HepG2 (cell line): ENCODE measurements at regions of chr1 and their contacts with region 1.

Region 1: GRCh38 chr1:155989242-155990004 is 11.1 kb upstream of the ARHGEF2 start:
- DNase-seq: peak; percentile 50
- ATAC-seq: peak; percentile 80
- H3K4me3 ChIP-seq: peak overlapping the region in 1 of 3 experiments; percentile 34; a peak in 1 of 6 replicates
- H3K27ac ChIP-seq: no peak overlapping the region
- H3K4me1 ChIP-seq: peaks cover 55% of the 10 kb centered on the region
- H3K27me3 ChIP-seq: no peaks in the 10 kb centered on the region
- CTCF ChIP-seq: peak; percentile 99
- EP300 ChIP-seq: 0 out of 4 replicates have a peak, but pooled peaks of 1 of the 2 experiments have one; percentile 39
- POLR2A ChIP-seq: no peak
- RAD21 ChIP-seq: peak; percentile 97

Region 2: GRCh38 chr1:155769257-155769656 is 220.2 kb before region 1 on chr1:
- CTCF ChIA-PET with region 1: no interaction called
- POLR2A ChIA-PET with region 1: no interaction called
- in situ Hi-C with region 1: no loop called
- intact Hi-C with region 1: no loop called
- DNase-seq: no peak
- ATAC-seq: no peak
- H3K4me3 ChIP-seq: no peak overlapping the region
- H3K27ac ChIP-seq: no peak overlapping the region
- H3K4me1 ChIP-seq: no peaks in the 10 kb centered on the region
- H3K27me3 ChIP-seq: no peaks in the 10 kb centered on the region
- CTCF ChIP-seq: no peak
- EP300 ChIP-seq: no peak
- POLR2A ChIP-seq: no peak
- RAD21 ChIP-seq: no peak

Region 3: GRCh38 chr1:155934097-155934935 is 55.1 kb before region 1 on chr1 and contains the start of gene KHDC4:
- CTCF ChIA-PET with region 1: interaction called, 32 read pairs
- POLR2A ChIA-PET with region 1: interaction called, 48 read pairs
- in situ Hi-C with region 1: loop called (anchors 10 kb)
- intact Hi-C with region 1: loop called (anchors 1 kb)
- DNase-seq: peak; percentile 98
- ATAC-seq: peak; percentile 95
- H3K4me3 ChIP-seq: peak within 1 kb of the TSS; percentile 83 to 98 (median 97)
- H3K27ac ChIP-seq: peak within 1 kb of the TSS; percentile 96
- H3K4me1 ChIP-seq: peaks cover 56% of the 10 kb centered on the region
- H3K27me3 ChIP-seq: no peaks in the 10 kb centered on the region; a peak in 1 of 5 replicates
- CTCF ChIP-seq: peak; percentile 27; the same call in 1 of the 2 replicates
- EP300 ChIP-seq: peak in 1 of 2 experiments; percentile 17; a peak in 1 of 4 replicates
- POLR2A ChIP-seq: peak; percentile 95 to 97
- RAD21 ChIP-seq: peak; percentile 34; the same call in 1 of the 2 replicates
- total RNA-seq, gene KHDC4: 15.9 and 33.5 TPM in 2 replicates

Region 4: DNA sequence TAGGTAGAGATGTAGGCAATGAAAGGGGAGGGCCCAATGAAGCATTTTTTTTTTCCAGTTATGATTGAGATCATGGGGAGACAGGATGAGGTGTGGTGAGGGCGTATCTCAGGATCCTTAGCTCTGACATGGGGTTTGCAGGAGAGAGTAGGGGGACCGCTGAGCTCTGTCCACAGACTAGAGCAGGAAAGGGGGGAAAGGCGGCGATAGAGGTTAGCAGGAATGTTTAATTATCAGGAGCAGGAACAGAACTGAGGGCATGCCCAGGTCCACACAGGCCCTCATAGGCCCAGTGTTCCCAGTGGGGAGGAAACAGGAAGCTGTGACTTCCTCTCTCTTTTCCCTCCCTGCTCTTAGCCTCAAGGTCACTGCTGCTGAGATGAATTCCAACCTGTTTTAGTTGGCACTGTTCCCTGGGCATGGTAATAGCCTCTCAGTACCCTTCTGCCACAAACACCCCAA is 48.9 kb before region 1 on chr1:
- CTCF ChIA-PET with region 1: interaction called, 32 read pairs
- POLR2A ChIA-PET with region 1: interaction called, 390 read pairs
- in situ Hi-C with region 1: loop called (anchors 10 kb)
- intact Hi-C with region 1: loop called (anchors 1 kb)
- DNase-seq: peak; percentile 86
- ATAC-seq: peak; percentile 65
- H3K4me3 ChIP-seq: peak overlapping the region; percentile 50 to 65 (median 54); a peak in 5 of 6 replicates
- H3K27ac ChIP-seq: peak overlapping the region; percentile 84
- H3K4me1 ChIP-seq: peaks cover 71% of the 10 kb centered on the region
- H3K27me3 ChIP-seq: no peaks in the 10 kb centered on the region
- CTCF ChIP-seq: peak; percentile 4; the same call in 1 of the 2 replicates
- EP300 ChIP-seq: 0 out of 4 replicates have a peak, but pooled peaks of 1 of the 2 experiments have one; percentile 29
- POLR2A ChIP-seq: peak; percentile 45 to 64
- RAD21 ChIP-seq: no peak

Region 5: GRCh38 chr1:155946633-155947219 is 42.7 kb before region 1 on chr1:
- CTCF ChIA-PET with region 1: interaction called, 5 read pairs
- POLR2A ChIA-PET with region 1: interaction called, 390 read pairs
- in situ Hi-C with region 1: no loop called
- intact Hi-C with region 1: no loop called
- DNase-seq: no peak
- ATAC-seq: no peak
- H3K4me3 ChIP-seq: no peak overlapping the region
- H3K27ac ChIP-seq: peak overlapping the region; percentile 86
- H3K4me1 ChIP-seq: peaks cover 50% of the 10 kb centered on the region
- H3K27me3 ChIP-seq: no peaks in the 10 kb centered on the region
- CTCF ChIP-seq: no peak
- EP300 ChIP-seq: no peak
- POLR2A ChIP-seq: no peak
- RAD21 ChIP-seq: no peak

Region 6: GRCh38 chr1:155960076-155960745 is 29.2 kb before region 1 on chr1:
- CTCF ChIA-PET with region 1: no interaction called
- POLR2A ChIA-PET with region 1: no interaction called
- in situ Hi-C with region 1: no loop called
- intact Hi-C with region 1: no loop called
- DNase-seq: no peak
- ATAC-seq: no peak
- H3K4me3 ChIP-seq: no peak overlapping the region
- H3K27ac ChIP-seq: no peak overlapping the region
- H3K4me1 ChIP-seq: no peaks in the 10 kb centered on the region
- H3K27me3 ChIP-seq: no peaks in the 10 kb centered on the region
- CTCF ChIP-seq: no peak
- EP300 ChIP-seq: no peak
- POLR2A ChIP-seq: no peak
- RAD21 ChIP-seq: no peak

Region 7: GRCh38 chr1:155978325-155978972 is 11.0 kb before region 1 on chr1 and contains the start of gene ARHGEF2:
- CTCF ChIA-PET with region 1: no interaction called
- POLR2A ChIA-PET with region 1: interaction called, 15 read pairs
- in situ Hi-C with region 1: no loop called
- intact Hi-C with region 1: no loop called
- DNase-seq: no peak
- ATAC-seq: peak; percentile 47
- H3K4me3 ChIP-seq: peak within 1 kb of the TSS; percentile 85 to 92 (median 90)
- H3K27ac ChIP-seq: peak within 1 kb of the TSS; percentile 56
- H3K4me1 ChIP-seq: peaks cover 83% of the 10 kb centered on the region
- H3K27me3 ChIP-seq: no peaks in the 10 kb centered on the region; a peak in 1 of 5 replicates
- CTCF ChIP-seq: peak; percentile 63
- EP300 ChIP-seq: no peak
- POLR2A ChIP-seq: peak in 1 of 2 experiments; percentile 60; a peak in 2 of 4 replicates
- RAD21 ChIP-seq: no peak
- total RNA-seq, gene ARHGEF2: 15.0 and 16.1 TPM in 2 replicates

Region 8: DNA sequence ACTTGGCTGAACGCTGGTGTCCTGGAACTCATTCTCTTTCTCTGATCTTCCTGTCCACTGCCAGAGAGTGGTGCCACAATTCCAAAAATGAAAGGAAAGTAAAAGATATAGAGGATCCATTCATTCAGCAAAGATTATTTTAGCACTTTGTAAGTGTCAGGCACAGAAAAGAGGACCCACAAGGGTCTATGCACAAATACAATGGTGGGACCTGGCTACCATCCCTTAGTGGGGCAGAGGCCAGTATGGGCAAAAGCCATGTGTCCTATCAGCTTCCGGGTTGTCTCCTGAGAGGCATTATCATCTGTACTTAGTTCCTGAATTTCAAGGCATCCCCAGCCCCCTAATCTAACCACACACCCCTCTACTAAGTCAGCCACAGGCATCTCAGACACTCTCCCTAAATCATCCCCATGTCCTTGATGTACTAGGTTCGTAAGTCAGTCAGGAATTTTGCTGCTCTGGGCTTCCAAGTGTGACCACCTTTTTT is 12.3 kb after region 1 on chr1:
- CTCF ChIA-PET with region 1: no interaction called
- POLR2A ChIA-PET with region 1: interaction called, 27 read pairs
- in situ Hi-C with region 1: no loop called
- intact Hi-C with region 1: no loop called
- DNase-seq: no peak
- ATAC-seq: peak; percentile 46
- H3K4me3 ChIP-seq: peak overlapping the region; percentile 40 to 55 (median 45)
- H3K27ac ChIP-seq: peak overlapping the region; percentile 48
- H3K4me1 ChIP-seq: peaks cover 55% of the 10 kb centered on the region
- H3K27me3 ChIP-seq: no peaks in the 10 kb centered on the region
- CTCF ChIP-seq: peak; percentile 45
- EP300 ChIP-seq: no peak
- POLR2A ChIP-seq: no peak
- RAD21 ChIP-seq: no peak